Naive thymus-derived CD4-positive, alpha-beta T cell (primary cell): ENCODE measurements at regions of chr2 and their contacts with region 1.

Region 1: GRCh38 chr2:124884315-124884714 is 859.2 kb downstream of the CNTNAP5 start:
- DNase-seq: no peak
- ATAC-seq: no peak
- H3K4me3 ChIP-seq: no peak overlapping the region
- H3K4me3 Mint-ChIP-seq: no peak overlapping the region
- H3K27ac ChIP-seq: no peak overlapping the region
- H3K27ac Mint-ChIP-seq: no peak overlapping the region
- H3K4me1 ChIP-seq: no peaks in the 10 kb centered on the region
- H3K4me1 Mint-ChIP-seq: no peaks in the 10 kb centered on the region
- H3K27me3 ChIP-seq: no peaks in the 10 kb centered on the region
- H3K27me3 Mint-ChIP-seq: no peaks in the 10 kb centered on the region

Region 2: DNA sequence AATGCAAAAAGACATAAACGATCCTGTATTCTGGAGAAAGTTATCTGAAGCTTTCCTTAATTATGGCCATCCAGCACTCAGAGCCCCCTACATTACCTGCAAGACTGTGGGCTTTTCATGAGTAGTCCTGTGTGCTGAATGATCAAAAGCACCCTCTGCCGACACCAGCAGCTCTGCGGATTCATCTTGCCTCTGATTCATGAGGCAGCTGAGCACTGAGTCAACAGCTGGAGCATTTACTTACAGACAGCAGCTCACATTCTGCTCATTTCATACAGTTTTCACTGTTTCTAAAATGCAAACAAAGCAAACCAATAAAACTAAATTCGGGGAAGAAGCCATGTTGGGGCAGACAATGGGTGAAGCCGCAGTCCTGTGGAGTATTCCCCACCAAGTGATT is 27.2 kb after region 1 on chr2:
- CTCF ChIA-PET with region 1: no interaction called
- POLR2A ChIA-PET with region 1: no interaction called
- intact Hi-C with region 1: loop called in 1 of 2 experiments (anchors 2 kb)
- DNase-seq: no peak
- ATAC-seq: no peak
- H3K4me3 ChIP-seq: no peak overlapping the region
- H3K4me3 Mint-ChIP-seq: no peak overlapping the region
- H3K27ac ChIP-seq: no peak overlapping the region
- H3K27ac Mint-ChIP-seq: no peak overlapping the region
- H3K4me1 ChIP-seq: no peaks in the 10 kb centered on the region
- H3K4me1 Mint-ChIP-seq: no peaks in the 10 kb centered on the region
- H3K27me3 ChIP-seq: no peaks in the 10 kb centered on the region
- H3K27me3 Mint-ChIP-seq: no peaks in the 10 kb centered on the region